PC-9 (cell line): ENCODE measurements at regions of chr7 and their contacts with region 1.

Region 1: DNA sequence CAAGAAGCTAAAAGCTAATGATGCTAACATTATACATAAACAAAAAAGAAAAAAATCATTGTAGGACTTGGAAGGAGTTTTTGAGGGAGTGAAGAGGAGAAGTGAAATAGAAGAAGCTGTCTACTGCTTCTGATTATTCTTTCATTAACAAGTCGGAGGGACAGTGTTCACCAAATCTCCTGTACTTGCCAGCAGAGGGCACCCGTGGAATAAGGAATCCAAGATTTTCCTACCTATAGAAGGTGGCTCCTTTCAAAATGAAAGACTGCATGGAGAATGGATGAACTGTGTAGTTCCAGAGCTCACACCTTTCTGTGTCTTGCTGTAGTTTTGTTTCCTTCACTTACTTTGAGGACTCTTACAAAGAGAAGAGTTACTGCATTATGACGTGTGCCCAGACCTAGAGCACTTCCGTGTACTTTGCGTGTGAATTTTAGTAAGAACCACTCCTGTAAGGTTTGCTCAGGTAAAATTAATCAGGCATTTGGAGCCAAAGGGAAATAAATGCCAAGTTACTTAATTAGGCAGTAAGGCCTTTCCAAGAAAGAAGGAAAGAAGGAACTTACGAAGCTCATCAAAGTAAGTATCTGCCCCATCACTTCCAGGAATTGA is 145.1 kb downstream of the SEMA3D start:
- DNase-seq: peak in 1 of 2 experiments; percentile 68
- H3K4me3 ChIP-seq: no peak overlapping the region
- H3K27ac ChIP-seq: no peak overlapping the region
- H3K4me1 ChIP-seq: no peaks in the 10 kb centered on the region
- H3K27me3 ChIP-seq: no peaks in the 10 kb centered on the region
- CTCF ChIP-seq: peak; percentile 86

Region 2: DNA sequence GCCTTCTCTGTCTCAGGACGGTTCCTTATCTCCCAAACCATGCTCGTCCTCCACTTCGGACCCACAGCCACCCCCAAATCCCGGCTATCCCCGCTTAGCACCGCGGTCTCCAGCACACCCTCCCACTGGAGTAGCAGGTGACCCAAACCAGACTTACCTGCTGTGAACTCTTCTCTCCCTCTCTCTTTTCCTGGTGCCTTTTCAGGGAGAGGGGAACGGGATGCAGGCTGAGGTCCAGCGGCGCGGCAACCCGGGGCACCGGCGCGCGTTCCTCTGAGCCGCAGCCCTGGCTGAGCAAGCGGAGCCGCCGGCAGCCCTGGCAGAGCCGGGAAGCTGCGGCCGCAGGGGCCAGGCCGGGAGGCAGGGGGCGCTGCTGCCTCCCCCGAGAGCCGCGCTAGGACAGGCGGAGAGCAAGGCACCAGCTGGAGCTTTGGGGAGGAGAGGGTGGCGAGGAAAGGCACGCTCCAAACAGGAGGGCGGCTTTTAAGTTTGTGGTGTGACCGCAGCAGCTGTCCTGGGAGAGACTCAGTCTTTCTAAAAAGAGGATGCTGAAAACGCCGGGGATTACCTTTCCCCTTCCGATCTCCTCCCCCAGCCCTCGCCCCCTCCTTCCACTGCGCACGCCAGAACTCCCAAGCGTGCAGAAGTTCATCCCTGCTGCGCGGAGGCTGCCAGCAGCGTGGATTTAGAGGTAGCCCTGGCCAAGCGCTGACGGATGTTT is 145.0 kb after region 1 on chr7 and contains the start of gene SEMA3D:
- CTCF ChIA-PET with region 1: interaction called, 6 read pairs
- POLR2A ChIA-PET with region 1: no interaction called
- intact Hi-C with region 1: loop called (anchors 1 kb)
- DNase-seq: peak; percentile 34 to 85
- H3K4me3 ChIP-seq: peak within 1 kb of the TSS; percentile 63
- H3K27ac ChIP-seq: no peak within 1 kb of the TSS
- H3K4me1 ChIP-seq: no peaks in the 10 kb centered on the region
- H3K27me3 ChIP-seq: peaks cover 13% of the 10 kb centered on the region; the same call in 1 of the 2 replicates
- CTCF ChIP-seq: peak; percentile 74
- total RNA-seq, gene SEMA3D: 2.6 and 4.8 TPM in 2 replicates

Region 3: DNA sequence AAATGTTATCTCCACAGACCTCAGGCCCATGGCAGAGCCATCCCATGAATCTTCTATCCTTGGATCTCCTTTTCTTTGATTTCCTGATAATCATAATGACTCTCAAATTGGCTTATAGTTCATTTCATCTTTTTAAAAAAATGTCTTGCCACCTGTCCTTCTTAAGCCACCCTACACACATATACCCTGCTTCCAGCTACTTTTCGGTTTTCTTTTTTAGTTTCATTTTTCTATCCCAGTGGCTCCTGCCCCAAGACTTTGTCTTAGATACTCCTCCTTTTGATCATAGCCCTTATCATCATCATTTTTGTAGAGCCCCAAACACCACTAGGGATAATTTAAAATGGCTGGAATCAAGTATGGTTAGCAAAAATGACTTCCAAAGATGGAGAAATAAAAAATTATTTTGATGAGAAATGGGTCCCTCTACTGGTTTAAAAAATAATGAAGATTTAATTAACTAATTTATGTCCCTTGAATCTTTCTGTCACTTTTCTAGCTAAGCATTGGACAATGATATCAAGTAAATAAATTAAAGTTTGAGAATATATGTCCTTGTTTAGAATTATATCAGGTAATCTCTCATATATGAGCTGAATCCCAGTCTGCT is 422.4 kb after region 1 on chr7:
- CTCF ChIA-PET with region 1: no interaction called
- POLR2A ChIA-PET with region 1: no interaction called
- intact Hi-C with region 1: loop called (anchors 2 kb)
- DNase-seq: no peak
- H3K4me3 ChIP-seq: no peak overlapping the region
- H3K27ac ChIP-seq: no peak overlapping the region
- H3K4me1 ChIP-seq: no peaks in the 10 kb centered on the region
- H3K27me3 ChIP-seq: no peaks in the 10 kb centered on the region
- CTCF ChIP-seq: peak; percentile 47; the same call in 1 of the 2 replicates

Region 4: GRCh38 chr7:85554236-85555178 is 512.8 kb after region 1 on chr7:
- CTCF ChIA-PET with region 1: no interaction called
- POLR2A ChIA-PET with region 1: no interaction called
- intact Hi-C with region 1: loop called (anchors 1 kb)
- DNase-seq: peak; percentile 6 to 55
- H3K4me3 ChIP-seq: no peak overlapping the region
- H3K27ac ChIP-seq: no peak overlapping the region
- H3K4me1 ChIP-seq: no peaks in the 10 kb centered on the region
- H3K27me3 ChIP-seq: no peaks in the 10 kb centered on the region
- CTCF ChIP-seq: peak; percentile 83

Region 5: DNA sequence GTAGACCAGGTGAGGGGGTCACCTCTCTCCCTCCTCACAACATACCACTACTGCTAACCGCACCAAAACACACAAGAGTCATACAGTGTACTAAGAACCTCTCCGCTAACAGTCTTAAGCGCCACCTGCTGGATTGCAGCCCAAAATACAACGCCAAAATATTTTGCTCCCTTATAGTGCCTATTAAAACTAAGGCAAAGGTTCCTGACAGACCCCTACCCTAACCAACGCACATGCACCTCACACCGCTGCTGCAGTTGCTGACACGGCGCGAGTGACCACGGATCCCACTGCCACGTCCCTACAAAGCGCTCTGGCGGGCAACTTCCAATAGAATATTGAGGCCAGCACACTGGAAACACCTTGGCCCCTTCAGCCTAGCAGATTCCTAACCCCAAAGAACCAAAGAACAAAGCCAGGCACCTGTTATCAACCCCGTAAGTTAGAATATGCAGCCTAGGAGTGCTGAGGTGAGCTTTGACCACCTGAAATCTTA is 708.8 kb after region 1 on chr7:
- CTCF ChIA-PET with region 1: no interaction called
- POLR2A ChIA-PET with region 1: no interaction called
- intact Hi-C with region 1: loop called (anchors 2 kb)
- DNase-seq: peak in 1 of 2 experiments; percentile 33
- H3K4me3 ChIP-seq: no peak overlapping the region
- H3K27ac ChIP-seq: no peak overlapping the region
- H3K4me1 ChIP-seq: no peaks in the 10 kb centered on the region
- H3K27me3 ChIP-seq: no peaks in the 10 kb centered on the region
- CTCF ChIP-seq: peak; percentile 74

Region 6: GRCh38 chr7:85829817-85830432 is 788.2 kb after region 1 on chr7:
- CTCF ChIA-PET with region 1: interaction called, 5 read pairs
- POLR2A ChIA-PET with region 1: no interaction called
- intact Hi-C with region 1: loop called (anchors 1 kb)
- DNase-seq: no peak
- H3K4me3 ChIP-seq: no peak overlapping the region
- H3K27ac ChIP-seq: no peak overlapping the region
- H3K4me1 ChIP-seq: no peaks in the 10 kb centered on the region
- H3K27me3 ChIP-seq: no peaks in the 10 kb centered on the region
- CTCF ChIP-seq: peak; percentile 62

Region 7: GRCh38 chr7:85851571-85852193 is 810.0 kb after region 1 on chr7:
- CTCF ChIA-PET with region 1: no interaction called
- POLR2A ChIA-PET with region 1: no interaction called
- intact Hi-C with region 1: loop called (anchors 1 kb)
- DNase-seq: no peak
- H3K4me3 ChIP-seq: no peak overlapping the region
- H3K27ac ChIP-seq: no peak overlapping the region
- H3K4me1 ChIP-seq: no peaks in the 10 kb centered on the region
- H3K27me3 ChIP-seq: no peaks in the 10 kb centered on the region
- CTCF ChIP-seq: peak; percentile 60